ENCODE measurements at regions of chr21 and their contacts with region 1.

Region 1: DNA sequence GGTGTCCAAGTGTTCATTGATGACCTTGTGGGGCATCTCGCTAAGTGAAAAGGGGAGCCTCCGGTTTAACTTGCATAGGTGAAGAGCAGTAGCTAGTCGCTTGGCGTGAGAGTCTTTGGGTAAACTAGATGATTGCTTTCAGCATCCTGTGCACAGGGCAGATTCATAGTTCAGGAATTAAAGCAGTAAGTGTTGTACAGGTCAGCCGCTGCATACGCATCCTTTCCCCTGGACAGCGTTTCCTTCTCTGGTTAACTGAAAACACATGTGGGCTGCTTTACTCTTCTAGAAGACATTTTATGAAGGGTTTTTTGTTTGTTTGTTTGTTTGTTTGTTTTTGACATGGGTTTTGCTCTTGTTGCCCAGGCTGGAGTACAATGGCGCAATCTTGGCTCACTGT is 12.1 kb downstream of the NDUFV3 start:
- DNase-seq: no peak
- H3K4me3 ChIP-seq: no peak overlapping the region
- H3K4me3 Mint-ChIP-seq: no peak overlapping the region
- H3K27ac ChIP-seq: no peak overlapping the region
- H3K27ac Mint-ChIP-seq: peak overlapping the region in 1 of 7 donors; percentile 15
- H3K4me1 ChIP-seq: no peaks in the 10 kb centered on the region
- H3K4me1 Mint-ChIP-seq: no peaks in the 10 kb centered on the region
- H3K27me3 ChIP-seq: no peaks in the 10 kb centered on the region
- H3K27me3 Mint-ChIP-seq: peaks cover 0 to 2% (median 0%) of the 10 kb centered on the region in 3 donors
- CTCF ChIP-seq: no peak

Region 2: DNA sequence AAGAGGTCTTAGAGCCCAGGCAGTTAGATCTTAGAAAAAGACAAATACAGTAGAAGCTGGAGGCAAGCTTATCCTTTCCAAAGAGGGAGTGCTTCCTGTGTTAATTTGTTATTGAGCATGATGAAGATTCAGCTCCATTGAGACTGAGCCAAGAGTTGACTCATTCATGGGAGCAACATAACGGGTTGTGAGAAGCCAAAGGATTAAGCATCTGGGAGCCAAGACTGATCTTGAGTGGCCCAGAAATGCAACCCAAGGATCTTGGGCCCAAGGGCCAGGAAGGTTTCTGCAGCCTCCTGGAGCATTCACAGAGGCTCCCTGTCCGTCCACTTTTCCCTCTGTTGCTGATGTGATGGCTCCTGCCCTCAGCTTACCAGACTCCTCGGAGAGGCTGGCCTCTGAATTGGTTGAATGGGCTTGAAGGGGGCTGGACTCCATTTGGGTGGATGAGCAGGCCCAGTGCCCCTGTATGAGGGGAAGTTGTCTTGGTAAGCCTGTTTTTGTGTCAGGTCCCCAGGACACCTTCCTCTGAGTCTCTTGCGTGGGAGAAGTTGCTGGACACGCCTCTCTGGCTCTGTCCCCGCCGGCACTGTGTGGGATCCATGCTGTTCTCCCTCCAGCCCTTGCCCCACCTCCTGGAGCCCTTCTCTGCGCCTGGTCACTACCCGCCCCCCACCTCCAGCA is 209.4 kb before region 1 on chr21:
- intact Hi-C with region 1: no loop called
- DNase-seq: no peak
- H3K4me3 ChIP-seq: no peak overlapping the region
- H3K4me3 Mint-ChIP-seq: no peak overlapping the region
- H3K27ac ChIP-seq: no peak overlapping the region
- H3K27ac Mint-ChIP-seq: no peak overlapping the region
- H3K4me1 ChIP-seq: no peaks in the 10 kb centered on the region
- H3K4me1 Mint-ChIP-seq: no peaks in the 10 kb centered on the region
- H3K27me3 ChIP-seq: no peaks in the 10 kb centered on the region
- H3K27me3 Mint-ChIP-seq: peaks cover 0 to 1% (median 0%) of the 10 kb centered on the region in 3 donors
- CTCF ChIP-seq: no peak

Region 3: DNA sequence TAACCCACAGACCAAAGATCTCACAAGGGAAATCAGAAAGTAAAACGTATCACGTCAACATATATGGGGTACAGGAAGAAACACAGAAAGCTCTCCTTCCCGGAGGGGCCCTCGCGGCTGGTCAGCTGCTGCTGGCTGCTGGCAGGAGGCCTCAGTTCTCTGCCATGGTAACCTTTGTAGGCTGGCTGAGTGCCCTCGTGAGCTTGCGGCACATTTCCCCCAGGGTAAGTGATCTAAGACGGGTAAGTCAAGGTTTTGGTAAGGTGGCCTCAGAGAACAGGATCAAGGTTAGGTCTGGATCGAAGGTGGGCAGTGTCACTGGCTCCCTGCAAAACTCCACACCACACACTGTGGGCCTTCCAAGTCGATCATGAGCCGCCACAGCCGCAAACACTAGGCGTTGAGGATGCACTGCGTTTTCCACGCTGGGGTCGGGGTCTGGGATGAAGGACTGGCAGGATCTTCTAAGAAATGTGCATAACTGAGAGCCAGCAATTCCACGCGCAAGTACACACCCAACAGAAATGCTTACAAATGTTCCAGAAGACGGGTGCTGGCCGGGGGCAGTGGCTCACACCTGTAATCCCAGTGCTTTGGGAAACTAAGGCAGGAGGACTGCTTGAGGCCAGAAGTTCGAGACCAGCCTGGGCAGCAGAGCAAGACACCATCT is 59.8 kb before region 1 on chr21:
- intact Hi-C with region 1: loop called in 1 of 2 experiments (anchors 10 kb)
- DNase-seq: no peak
- H3K4me3 ChIP-seq: no peak overlapping the region
- H3K4me3 Mint-ChIP-seq: no peak overlapping the region
- H3K27ac ChIP-seq: no peak overlapping the region
- H3K27ac Mint-ChIP-seq: peak overlapping the region in 1 of 7 donors; percentile 20
- H3K4me1 ChIP-seq: no peaks in the 10 kb centered on the region
- H3K4me1 Mint-ChIP-seq: no peaks in the 10 kb centered on the region
- H3K27me3 ChIP-seq: no peaks in the 10 kb centered on the region
- H3K27me3 Mint-ChIP-seq: peaks cover 0 to 3% (median 0%) of the 10 kb centered on the region in 3 donors
- CTCF ChIP-seq: no peak

Measured in CD14-positive monocyte (primary cell).